HepG2 (cell line): ENCODE measurements at regions of chr16 and their contacts with region 1.

Region 1: DNA sequence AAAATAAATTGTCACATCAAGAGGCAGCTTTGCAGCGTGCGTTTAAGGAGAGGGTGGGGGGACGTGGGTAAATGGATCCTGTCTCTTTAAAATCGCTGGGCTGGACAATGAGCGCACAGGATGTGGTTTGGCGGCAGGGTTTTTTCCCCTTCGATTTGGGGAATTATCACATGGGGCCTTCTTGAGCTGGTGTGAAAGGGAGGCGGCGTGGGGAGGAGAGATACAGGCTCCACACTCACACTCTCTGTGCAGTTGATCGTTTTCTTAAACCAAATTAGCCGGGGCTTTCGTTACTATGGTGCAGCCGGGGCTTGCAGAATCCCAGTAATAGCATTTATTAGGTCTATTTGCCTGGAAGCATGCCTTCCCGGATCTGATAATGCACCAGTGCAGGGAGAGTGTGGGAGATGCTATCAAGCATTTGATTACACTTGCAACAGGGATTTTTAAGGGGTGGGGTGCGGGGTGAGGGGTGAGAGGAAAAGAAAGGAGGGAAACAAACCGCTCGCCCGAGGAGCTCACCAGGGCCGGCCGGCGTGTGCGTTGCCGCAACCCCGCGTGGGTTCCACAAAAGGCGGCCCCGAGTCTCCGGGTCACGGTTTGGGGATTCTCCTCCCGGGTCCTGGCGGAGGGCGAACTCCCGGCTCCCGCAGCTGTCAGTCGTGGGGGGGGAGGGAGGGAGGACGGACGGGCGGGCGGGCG is 58.9 kb upstream of the GSE1 start:
- DNase-seq: peak; percentile 56
- ATAC-seq: peak; percentile 26
- H3K4me3 ChIP-seq: peak overlapping the region; percentile 75 to 82 (median 81)
- H3K27ac ChIP-seq: peak overlapping the region; percentile 80
- H3K4me1 ChIP-seq: peaks cover 60% of the 10 kb centered on the region
- H3K27me3 ChIP-seq: no peaks in the 10 kb centered on the region
- CTCF ChIP-seq: no peak
- EP300 ChIP-seq: peak in 1 of 2 experiments; percentile 7; a peak in 1 of 4 replicates
- POLR2A ChIP-seq: peak; percentile 36 to 48; a peak in 2 of 4 replicates
- RAD21 ChIP-seq: no peak

Region 2: DNA sequence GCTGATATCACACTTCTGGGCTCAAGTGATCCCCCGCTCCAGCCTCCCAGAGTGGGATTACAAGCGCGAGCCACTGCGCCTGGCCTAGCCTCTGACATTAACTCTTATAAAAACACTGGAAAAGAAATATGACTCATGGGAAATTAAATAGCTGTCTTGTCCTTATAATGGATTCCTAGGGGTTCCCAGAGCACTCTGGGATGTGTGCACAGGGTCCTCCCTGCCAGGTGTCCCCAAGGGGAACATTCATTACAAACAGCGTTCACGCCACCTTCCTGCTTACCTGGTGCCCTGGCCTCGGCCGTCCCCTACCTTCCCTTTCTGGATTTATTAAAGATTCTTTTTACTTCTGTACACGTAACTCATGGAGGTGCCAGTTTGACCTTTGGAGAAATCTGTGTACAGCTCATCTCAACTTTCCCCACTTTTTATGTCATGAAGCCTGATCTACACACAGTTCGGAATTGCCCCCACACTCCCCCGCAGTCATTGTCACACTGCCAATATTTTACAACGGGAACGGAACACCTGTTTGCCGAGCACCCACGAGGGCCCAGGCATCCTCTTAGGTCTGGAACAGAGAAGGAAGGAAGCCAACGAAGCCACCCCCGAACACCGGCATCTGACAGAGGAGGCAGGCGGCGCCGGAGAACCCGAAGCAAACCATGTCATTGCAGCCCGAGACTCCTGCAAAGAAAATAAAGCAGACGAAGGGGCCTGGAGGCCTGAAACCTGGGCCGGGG is 1010.1 kb before region 1 on chr16:
- CTCF ChIA-PET with region 1: no interaction called
- POLR2A ChIA-PET with region 1: no interaction called
- in situ Hi-C with region 1: no loop called
- intact Hi-C with region 1: no loop called
- DNase-seq: no peak
- ATAC-seq: no peak
- H3K4me3 ChIP-seq: no peak overlapping the region
- H3K27ac ChIP-seq: no peak overlapping the region
- H3K4me1 ChIP-seq: peaks cover 51% of the 10 kb centered on the region
- H3K27me3 ChIP-seq: peaks cover 3 to 20% of the 10 kb centered on the region in 2 experiments; a peak in 3 of 5 replicates
- CTCF ChIP-seq: no peak
- EP300 ChIP-seq: no peak
- POLR2A ChIP-seq: no peak
- RAD21 ChIP-seq: no peak

Region 3: DNA sequence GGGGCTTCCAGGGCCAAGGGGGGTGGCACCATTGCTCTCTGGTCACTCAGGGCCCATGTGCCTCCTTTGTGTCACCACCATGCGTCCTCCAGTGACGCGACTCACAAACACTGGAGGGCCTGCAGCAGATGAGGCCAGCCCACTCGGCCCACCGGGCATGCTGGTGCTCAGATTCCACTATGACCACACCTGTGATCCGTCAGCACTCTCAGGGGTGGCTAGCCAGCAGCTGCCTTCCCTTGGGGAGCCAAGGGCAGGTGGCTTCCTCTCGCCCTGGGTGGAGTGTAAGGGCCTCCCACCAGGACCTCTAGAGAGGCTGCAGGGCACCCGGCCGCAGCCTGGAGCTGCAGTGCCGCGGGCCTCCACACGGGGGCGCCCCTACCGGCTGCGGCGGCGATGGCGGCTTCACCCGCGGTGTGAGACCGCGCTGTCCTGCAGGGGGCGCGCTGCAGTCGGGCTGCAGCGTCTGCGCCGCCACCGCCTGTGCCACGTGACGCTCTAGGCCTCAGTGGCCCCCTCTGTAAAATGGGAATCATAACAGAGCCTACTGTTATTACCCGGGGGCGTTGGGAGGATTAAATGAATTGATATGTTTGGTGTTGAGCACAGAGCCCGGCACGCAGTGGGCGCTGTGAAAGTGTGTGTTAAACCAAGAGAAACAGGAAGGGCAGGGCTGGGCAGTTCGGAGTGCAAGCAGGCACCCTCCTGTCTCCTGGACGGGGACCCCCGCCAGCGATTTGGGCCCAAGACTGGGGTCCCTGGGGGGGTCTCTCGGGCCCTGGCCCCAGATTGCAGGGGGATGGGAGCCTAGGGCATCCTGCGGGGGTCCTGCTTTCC is 133.5 kb before region 1 on chr16:
- CTCF ChIA-PET with region 1: interaction called, 16 read pairs
- POLR2A ChIA-PET with region 1: interaction called, 14 read pairs
- in situ Hi-C with region 1: no loop called
- intact Hi-C with region 1: loop called (anchors 1 kb)
- DNase-seq: peak; percentile 35
- ATAC-seq: peak; percentile 50
- H3K4me3 ChIP-seq: peak overlapping the region in 1 of 3 experiments; percentile 65; a peak in 1 of 6 replicates
- H3K27ac ChIP-seq: no peak overlapping the region
- H3K4me1 ChIP-seq: peaks cover 46% of the 10 kb centered on the region
- H3K27me3 ChIP-seq: peaks cover 5 to 18% of the 10 kb centered on the region in 2 experiments; a peak in 4 of 5 replicates
- CTCF ChIP-seq: peak; percentile 100
- EP300 ChIP-seq: peak; percentile 35 to 67; a peak in 3 of 4 replicates
- POLR2A ChIP-seq: no peak
- RAD21 ChIP-seq: peak; percentile 100

Region 4: GRCh38 chr16:85491058-85491771 is 63.0 kb before region 1 on chr16:
- CTCF ChIA-PET with region 1: interaction called, 3 read pairs
- POLR2A ChIA-PET with region 1: interaction called, 21 read pairs
- in situ Hi-C with region 1: no loop called
- intact Hi-C with region 1: loop called (anchors 1 kb)
- DNase-seq: peak; percentile 53
- ATAC-seq: peak; percentile 62
- H3K4me3 ChIP-seq: peak overlapping the region in 2 of 3 experiments; percentile 20 to 61; a peak in 2 of 6 replicates
- H3K27ac ChIP-seq: no peak overlapping the region
- H3K4me1 ChIP-seq: peaks cover 32% of the 10 kb centered on the region
- H3K27me3 ChIP-seq: peaks cover 0 to 2% of the 10 kb centered on the region in 2 experiments; a peak in 1 of 5 replicates
- CTCF ChIP-seq: peak; percentile 95
- EP300 ChIP-seq: no peak
- POLR2A ChIP-seq: no peak
- RAD21 ChIP-seq: peak; percentile 90

Region 5: DNA sequence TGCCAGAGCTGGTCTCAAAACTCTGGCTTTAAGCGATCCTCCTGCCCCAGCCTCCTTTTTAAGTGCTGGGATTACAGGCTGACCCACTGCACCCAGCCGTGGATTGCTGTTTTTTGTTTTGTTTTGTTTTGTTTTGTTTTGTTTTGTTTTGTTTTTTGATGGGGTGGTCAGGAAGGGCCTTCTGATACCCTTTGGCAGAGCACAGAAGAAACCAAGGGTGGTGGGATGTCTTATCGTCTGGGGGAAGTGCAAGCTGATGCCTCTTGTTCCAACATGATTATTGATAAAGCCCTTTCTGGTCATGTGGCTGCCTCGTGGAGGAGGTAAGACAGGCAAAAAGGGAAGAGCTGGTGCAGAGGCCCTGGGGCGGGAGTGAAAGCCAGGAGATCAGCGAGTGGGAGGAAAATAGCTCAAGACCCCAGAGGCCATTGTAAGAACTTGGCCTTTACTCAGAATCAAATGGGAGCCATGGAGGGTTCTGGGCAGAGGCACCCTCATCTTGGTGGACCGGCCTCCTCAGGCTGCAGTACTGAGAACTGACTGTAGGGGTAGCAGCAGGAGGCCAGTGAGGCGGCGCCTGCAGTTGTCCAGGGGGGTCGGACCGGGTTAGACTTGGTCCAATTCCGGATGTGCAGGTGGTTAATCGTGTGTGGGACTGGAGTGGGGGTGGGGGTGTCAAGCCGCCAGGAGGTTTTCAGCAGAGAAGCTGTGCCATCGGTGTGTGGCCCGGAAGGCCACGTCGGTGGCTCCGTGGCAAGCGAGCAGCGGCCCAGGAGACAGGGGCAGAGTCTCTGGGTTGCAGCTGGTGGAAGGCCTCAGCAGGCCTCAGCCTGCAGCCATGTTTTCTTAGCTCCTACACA is 25.5 kb before region 1 on chr16:
- CTCF ChIA-PET with region 1: interaction called, 3 read pairs
- POLR2A ChIA-PET with region 1: interaction called, 145 read pairs
- in situ Hi-C with region 1: no loop called
- intact Hi-C with region 1: no loop called
- DNase-seq: no peak
- ATAC-seq: no peak
- H3K4me3 ChIP-seq: no peak overlapping the region
- H3K27ac ChIP-seq: no peak overlapping the region
- H3K4me1 ChIP-seq: peaks cover 99% of the 10 kb centered on the region
- H3K27me3 ChIP-seq: no peaks in the 10 kb centered on the region
- CTCF ChIP-seq: peak; percentile 72
- EP300 ChIP-seq: no peak
- POLR2A ChIP-seq: no peak
- RAD21 ChIP-seq: 0 out of 2 replicates have a peak, but pooled peaks have one; percentile 39

Region 6: GRCh38 chr16:85564277-85565051 is 10.2 kb after region 1 on chr16:
- CTCF ChIA-PET with region 1: no interaction called
- POLR2A ChIA-PET with region 1: interaction called, 13 read pairs
- in situ Hi-C with region 1: no loop called
- intact Hi-C with region 1: no loop called
- DNase-seq: no peak
- ATAC-seq: no peak
- H3K4me3 ChIP-seq: no peak overlapping the region
- H3K27ac ChIP-seq: no peak overlapping the region
- H3K4me1 ChIP-seq: peaks cover 56% of the 10 kb centered on the region
- H3K27me3 ChIP-seq: no peaks in the 10 kb centered on the region
- CTCF ChIP-seq: peak; percentile 72
- EP300 ChIP-seq: no peak
- POLR2A ChIP-seq: no peak
- RAD21 ChIP-seq: no peak

Region 7: GRCh38 chr16:85908444-85908843 is 354.2 kb after region 1 on chr16:
- CTCF ChIA-PET with region 1: no interaction called
- POLR2A ChIA-PET with region 1: no interaction called
- in situ Hi-C with region 1: no loop called
- intact Hi-C with region 1: no loop called
- DNase-seq: no peak
- ATAC-seq: no peak
- H3K4me3 ChIP-seq: no peak overlapping the region
- H3K27ac ChIP-seq: no peak overlapping the region
- H3K4me1 ChIP-seq: no peaks in the 10 kb centered on the region
- H3K27me3 ChIP-seq: peaks cover 0 to 38% of the 10 kb centered on the region in 2 experiments; a peak in 4 of 5 replicates
- CTCF ChIP-seq: no peak
- EP300 ChIP-seq: no peak
- POLR2A ChIP-seq: no peak
- RAD21 ChIP-seq: no peak